IMR-90 (cell line): ENCODE measurements at regions of chr19 and their contacts with region 1.

Region 1: GRCh38 chr19:52139252-52140031 is at the start of gene ZNF616:
- DNase-seq: peak; percentile 91
- ATAC-seq: peak; percentile 82
- H3K4me3 ChIP-seq: peak within 1 kb of the TSS; percentile 53
- H3K27ac ChIP-seq: peak within 1 kb of the TSS; percentile 91
- H3K4me1 ChIP-seq: peaks cover 2% of the 10 kb centered on the region
- H3K27me3 ChIP-seq: no peaks in the 10 kb centered on the region
- CTCF ChIP-seq: peak; percentile 76
- POLR2A ChIP-seq: peak; percentile 83
- RAD21 ChIP-seq: peak; percentile 61
- total RNA-seq, gene ZNF616: 13.3 and 13.6 TPM in 2 replicates

Region 2: GRCh38 chr19:51948975-51949374 is 190.5 kb before region 1 on chr19:
- CTCF ChIA-PET with region 1: no interaction called
- POLR2A ChIA-PET with region 1: no interaction called
- dilution Hi-C with region 1: no loop called
- in situ Hi-C with region 1: no loop called
- intact Hi-C with region 1: no loop called
- DNase-seq: peak; percentile 23
- ATAC-seq: peak; percentile 44; the same call in 1 of the 2 replicates
- H3K4me3 ChIP-seq: peak overlapping the region; percentile 39
- H3K27ac ChIP-seq: no peak overlapping the region
- H3K4me1 ChIP-seq: no peaks in the 10 kb centered on the region
- H3K27me3 ChIP-seq: no peaks in the 10 kb centered on the region
- CTCF ChIP-seq: no peak
- POLR2A ChIP-seq: no peak
- RAD21 ChIP-seq: no peak

Region 3: DNA sequence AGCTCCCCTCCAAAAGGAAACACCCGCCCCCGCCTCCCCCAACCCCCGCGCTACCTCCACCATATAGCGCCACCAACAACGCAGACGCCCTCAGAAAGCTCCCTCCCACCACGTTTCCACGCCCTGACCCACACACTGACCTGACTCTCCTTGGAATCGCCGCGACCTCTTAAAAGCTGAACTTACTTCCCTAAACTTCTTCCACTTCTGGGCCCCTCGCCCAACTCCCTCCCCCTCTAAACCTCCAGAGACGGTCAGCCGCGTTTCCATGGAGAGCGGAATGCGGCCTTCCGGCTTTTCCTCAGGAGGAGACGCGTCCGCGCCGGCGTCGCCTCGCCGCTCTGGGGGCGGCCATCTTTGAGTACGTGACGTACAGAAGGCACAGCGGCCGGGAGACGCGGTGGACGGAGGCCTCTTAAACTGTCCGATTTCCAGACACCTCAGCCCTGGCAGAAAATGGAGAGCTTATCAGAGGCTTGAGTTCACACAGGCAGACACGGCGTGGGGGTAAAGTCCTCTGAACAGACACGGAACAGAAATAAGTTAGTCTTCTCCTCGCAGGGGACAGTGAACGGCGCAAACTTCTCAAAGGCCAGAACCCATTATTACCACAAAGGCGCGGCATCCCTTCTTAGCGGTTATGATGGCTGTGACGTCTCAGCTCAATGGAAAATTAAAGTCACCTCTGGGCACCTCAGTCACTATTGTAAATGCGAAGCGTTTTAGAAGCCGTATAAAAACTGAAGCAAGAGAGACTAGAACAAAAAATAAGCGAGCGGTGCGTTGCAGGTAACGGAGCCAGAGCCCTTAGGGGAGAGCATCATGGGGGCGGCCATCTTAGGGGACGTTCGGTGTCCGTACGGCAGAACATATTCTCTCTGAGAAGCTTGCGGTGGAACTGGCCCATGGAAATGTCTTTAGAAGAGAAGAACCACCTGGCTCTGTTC is 90.6 kb before region 1 on chr19 and contains the start of gene ZNF432:
- CTCF ChIA-PET with region 1: no interaction called
- POLR2A ChIA-PET with region 1: no interaction called
- dilution Hi-C with region 1: no loop called
- in situ Hi-C with region 1: no loop called
- intact Hi-C with region 1: loop called (anchors 5 kb)
- DNase-seq: peak; percentile 91
- ATAC-seq: peak; percentile 97
- H3K4me3 ChIP-seq: peak within 1 kb of the TSS; percentile 85
- H3K27ac ChIP-seq: peak within 1 kb of the TSS; percentile 96
- H3K4me1 ChIP-seq: no peaks in the 10 kb centered on the region
- H3K27me3 ChIP-seq: no peaks in the 10 kb centered on the region
- CTCF ChIP-seq: no peak
- POLR2A ChIP-seq: peak; percentile 70
- RAD21 ChIP-seq: no peak
- total RNA-seq, gene ZNF432: 12.4 and 12.8 TPM in 2 replicates